GM12878 (cell line): ENCODE measurements at regions of chr3 and their contacts with region 1.

Region 1: GRCh38 chr3:179071550-179072397 is at the start of gene ZMAT3:
- DNase-seq: no peak
- ATAC-seq: peak; percentile 73
- H3K4me3 ChIP-seq: peak within 1 kb of the TSS; percentile 70
- H3K27ac ChIP-seq: peak within 1 kb of the TSS; percentile 92
- H3K4me1 ChIP-seq: peaks cover 23% of the 10 kb centered on the region
- H3K27me3 ChIP-seq: no peaks in the 10 kb centered on the region
- CTCF ChIP-seq: no peak
- EP300 ChIP-seq: no peak
- POLR2A ChIP-seq: peak; percentile 93
- RAD21 ChIP-seq: no peak
- polyA plus RNA-seq, gene ZMAT3: 6.2 to 10.4 TPM

Region 2: DNA sequence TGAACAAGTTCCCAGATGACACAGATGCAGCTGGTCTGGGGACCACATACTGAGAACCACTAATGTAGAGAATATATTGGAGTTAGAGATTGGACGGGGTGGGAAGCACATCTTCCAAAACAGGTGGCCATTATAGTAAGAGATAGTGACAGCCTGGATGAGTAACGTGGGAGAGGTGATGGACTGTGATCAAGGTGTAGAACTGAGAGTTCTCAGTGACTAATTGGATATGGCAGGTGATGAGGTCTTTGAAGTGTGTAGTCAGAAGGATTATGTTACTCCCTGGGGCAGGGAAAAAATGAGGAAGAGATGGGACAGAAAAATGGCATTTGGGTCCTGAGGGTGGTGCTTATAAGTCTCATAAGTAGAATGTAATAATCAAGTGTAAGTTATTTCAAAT is 468.9 kb before region 1 on chr3:
- CTCF ChIA-PET with region 1: no interaction called
- POLR2A ChIA-PET with region 1: no interaction called
- RAD21 ChIA-PET with region 1: no interaction called
- SMC1A ChIA-PET with region 1: no interaction called
- in situ Hi-C with region 1: no loop called
- intact Hi-C with region 1: no loop called
- DNase-seq: no peak
- ATAC-seq: no peak
- H3K4me3 ChIP-seq: no peak overlapping the region
- H3K27ac ChIP-seq: no peak overlapping the region; the same call in 1 of the 2 replicates
- H3K4me1 ChIP-seq: peaks cover 7% of the 10 kb centered on the region
- H3K27me3 ChIP-seq: no peaks in the 10 kb centered on the region
- CTCF ChIP-seq: no peak
- EP300 ChIP-seq: no peak
- POLR2A ChIP-seq: no peak
- RAD21 ChIP-seq: no peak

Region 3: GRCh38 chr3:179027326-179027900 is 44.4 kb before region 1 on chr3:
- CTCF ChIA-PET with region 1: interaction called, 11 read pairs
- POLR2A ChIA-PET with region 1: interaction called, 3 read pairs
- RAD21 ChIA-PET with region 1: interaction called, 4 read pairs
- SMC1A ChIA-PET with region 1: interaction called, 7 read pairs
- in situ Hi-C with region 1: no loop called
- intact Hi-C with region 1: no loop called
- DNase-seq: no peak
- ATAC-seq: no peak
- H3K4me3 ChIP-seq: no peak overlapping the region
- H3K27ac ChIP-seq: no peak overlapping the region
- H3K4me1 ChIP-seq: no peaks in the 10 kb centered on the region
- H3K27me3 ChIP-seq: no peaks in the 10 kb centered on the region
- CTCF ChIP-seq: no peak
- EP300 ChIP-seq: no peak
- POLR2A ChIP-seq: no peak
- RAD21 ChIP-seq: no peak

Region 4: GRCh38 chr3:179098388-179099077 is 26.8 kb after region 1 on chr3:
- CTCF ChIA-PET with region 1: interaction called, 44 read pairs
- POLR2A ChIA-PET with region 1: interaction called, 5 read pairs
- RAD21 ChIA-PET with region 1: interaction called, 4 read pairs
- SMC1A ChIA-PET with region 1: interaction called, 18 read pairs
- in situ Hi-C with region 1: no loop called
- intact Hi-C with region 1: no loop called
- DNase-seq: no peak
- ATAC-seq: peak; percentile 21; the same call in 2 of the 3 replicates
- H3K4me3 ChIP-seq: no peak overlapping the region
- H3K27ac ChIP-seq: no peak overlapping the region
- H3K4me1 ChIP-seq: no peaks in the 10 kb centered on the region
- H3K27me3 ChIP-seq: no peaks in the 10 kb centered on the region
- CTCF ChIP-seq: no peak
- EP300 ChIP-seq: no peak
- POLR2A ChIP-seq: no peak
- RAD21 ChIP-seq: peak; percentile 6; the same call in 1 of the 2 replicates

Region 5: GRCh38 chr3:179272385-179272784 is 200.6 kb after region 1 on chr3:
- CTCF ChIA-PET with region 1: interaction called, 10 read pairs
- POLR2A ChIA-PET with region 1: no interaction called
- RAD21 ChIA-PET with region 1: no interaction called
- SMC1A ChIA-PET with region 1: interaction called, 5 read pairs
- in situ Hi-C with region 1: no loop called
- intact Hi-C with region 1: no loop called
- DNase-seq: no peak
- ATAC-seq: no peak
- H3K4me3 ChIP-seq: no peak overlapping the region
- H3K27ac ChIP-seq: no peak overlapping the region
- H3K4me1 ChIP-seq: no peaks in the 10 kb centered on the region
- H3K27me3 ChIP-seq: no peaks in the 10 kb centered on the region; a peak in 1 of 4 replicates
- CTCF ChIP-seq: peak; percentile 16 to 22 (median 19); a peak in 4 of 6 replicates
- EP300 ChIP-seq: no peak
- POLR2A ChIP-seq: no peak
- RAD21 ChIP-seq: peak; percentile 29; the same call in 1 of the 2 replicates

Region 6: DNA sequence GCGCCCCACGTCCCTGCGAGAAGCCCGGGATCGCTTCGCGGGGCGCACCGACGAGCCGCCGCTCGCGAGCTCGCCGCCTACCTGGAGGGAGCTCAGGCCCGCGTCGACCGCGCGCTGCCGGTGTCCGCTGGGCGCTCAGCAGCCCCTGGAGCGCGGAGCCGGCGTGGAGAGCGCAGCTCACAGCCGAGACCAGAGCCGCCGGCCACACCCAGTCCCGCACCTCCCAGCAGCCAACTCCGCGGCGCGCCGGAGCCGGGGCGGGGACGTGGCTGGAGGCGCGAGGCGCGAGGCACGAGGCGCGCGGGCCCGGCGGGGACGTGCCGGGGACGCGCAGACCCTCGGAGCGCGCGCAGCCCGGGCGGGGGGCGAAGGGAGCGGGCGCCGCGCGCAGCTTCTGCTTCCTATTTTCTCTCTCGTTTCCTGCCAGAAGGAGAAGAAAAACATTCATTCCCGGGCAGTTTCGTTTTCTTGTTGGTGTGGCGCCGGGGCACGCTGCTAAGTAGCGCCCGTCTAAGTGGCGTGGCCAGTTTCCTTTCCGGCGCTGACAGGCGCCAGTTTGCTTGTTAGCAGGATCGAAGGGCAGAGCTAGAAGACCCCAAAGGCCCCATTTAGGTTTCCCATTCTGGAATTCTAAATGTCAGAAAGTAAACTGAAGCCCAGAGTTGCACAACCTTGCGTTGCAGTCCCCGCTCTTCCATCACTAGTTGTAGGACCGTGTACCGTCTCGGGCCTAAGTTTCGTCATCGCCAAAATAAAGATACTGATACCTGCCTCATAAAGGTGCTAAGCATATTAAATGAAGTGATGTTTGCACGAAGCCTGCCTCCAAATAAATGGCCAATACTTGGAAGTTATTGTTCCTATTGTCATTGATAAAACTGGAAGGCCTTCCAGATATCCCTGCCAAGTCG is 379.7 kb after region 1 on chr3 and contains the start of gene GNB4:
- CTCF ChIA-PET with region 1: no interaction called
- POLR2A ChIA-PET with region 1: no interaction called
- RAD21 ChIA-PET with region 1: no interaction called
- SMC1A ChIA-PET with region 1: no interaction called
- in situ Hi-C with region 1: no loop called
- intact Hi-C with region 1: no loop called
- DNase-seq: no peak
- ATAC-seq: peak; percentile 84
- H3K4me3 ChIP-seq: peak within 1 kb of the TSS; percentile 70
- H3K27ac ChIP-seq: no peak within 1 kb of the TSS
- H3K4me1 ChIP-seq: no peaks in the 10 kb centered on the region; the same call in 1 of the 2 replicates
- H3K27me3 ChIP-seq: peaks cover 0 to 10% of the 10 kb centered on the region in 2 experiments; a peak in 1 of 4 replicates
- CTCF ChIP-seq: no peak
- EP300 ChIP-seq: no peak
- POLR2A ChIP-seq: peak; percentile 61
- RAD21 ChIP-seq: no peak
- polyA plus RNA-seq, gene GNB4: 0.91 to 1.0 TPM

Region 7: GRCh38 chr3:179562591-179563270 is 491.0 kb after region 1 on chr3 and contains the start of gene ACTL6A:
- CTCF ChIA-PET with region 1: no interaction called
- POLR2A ChIA-PET with region 1: interaction called, 14 read pairs
- RAD21 ChIA-PET with region 1: interaction called, 5 read pairs
- SMC1A ChIA-PET with region 1: interaction called, 4 read pairs
- in situ Hi-C with region 1: no loop called
- intact Hi-C with region 1: no loop called
- DNase-seq: peak; percentile 98
- ATAC-seq: peak; percentile 96
- H3K4me3 ChIP-seq: peak within 1 kb of the TSS; percentile 96
- H3K27ac ChIP-seq: peak within 1 kb of the TSS; percentile 75
- H3K4me1 ChIP-seq: no peaks in the 10 kb centered on the region
- H3K27me3 ChIP-seq: no peaks in the 10 kb centered on the region; a peak in 1 of 4 replicates
- CTCF ChIP-seq: no peak
- EP300 ChIP-seq: 0 out of 4 replicates have a peak, but pooled peaks of 1 of the 2 experiments have one; percentile 9
- POLR2A ChIP-seq: peak; percentile 92
- RAD21 ChIP-seq: no peak
- polyA plus RNA-seq, gene ACTL6A: 102 to 123 TPM